Heart right ventricle (tissue), 16 donors: ENCODE measurements at regions of chr5 and their contacts with region 1.

Region 1: GRCh38 chr5:142618130-142618523 is 67.8 kb downstream of the FGF1 start:
- DNase-seq: peak in 1 of 2 donors; percentile 41
- ATAC-seq: peak in 7 of 8 donors; percentile 27 to 71 (median 62)
- H3K4me3 ChIP-seq: no peak overlapping the region
- H3K27ac ChIP-seq: peak overlapping the region in 5 of 10 donors; percentile 6 to 57 (median 40)
- H3K4me1 ChIP-seq: peaks cover 0 to 28% (median 4%) of the 10 kb centered on the region in 9 donors
- H3K27me3 ChIP-seq: no peaks in the 10 kb centered on the region
- CTCF ChIP-seq: no peak

Region 2: GRCh38 chr5:142233083-142234032 is 384.8 kb before region 1 on chr5:
- intact Hi-C with region 1: no loop called
- DNase-seq: no peak
- ATAC-seq: no peak
- H3K4me3 ChIP-seq: no peak overlapping the region
- H3K27ac ChIP-seq: no peak overlapping the region
- H3K4me1 ChIP-seq: peaks cover 0 to 13% (median 3%) of the 10 kb centered on the region in 9 donors
- H3K27me3 ChIP-seq: no peaks in the 10 kb centered on the region
- CTCF ChIP-seq: no peak

Region 3: DNA sequence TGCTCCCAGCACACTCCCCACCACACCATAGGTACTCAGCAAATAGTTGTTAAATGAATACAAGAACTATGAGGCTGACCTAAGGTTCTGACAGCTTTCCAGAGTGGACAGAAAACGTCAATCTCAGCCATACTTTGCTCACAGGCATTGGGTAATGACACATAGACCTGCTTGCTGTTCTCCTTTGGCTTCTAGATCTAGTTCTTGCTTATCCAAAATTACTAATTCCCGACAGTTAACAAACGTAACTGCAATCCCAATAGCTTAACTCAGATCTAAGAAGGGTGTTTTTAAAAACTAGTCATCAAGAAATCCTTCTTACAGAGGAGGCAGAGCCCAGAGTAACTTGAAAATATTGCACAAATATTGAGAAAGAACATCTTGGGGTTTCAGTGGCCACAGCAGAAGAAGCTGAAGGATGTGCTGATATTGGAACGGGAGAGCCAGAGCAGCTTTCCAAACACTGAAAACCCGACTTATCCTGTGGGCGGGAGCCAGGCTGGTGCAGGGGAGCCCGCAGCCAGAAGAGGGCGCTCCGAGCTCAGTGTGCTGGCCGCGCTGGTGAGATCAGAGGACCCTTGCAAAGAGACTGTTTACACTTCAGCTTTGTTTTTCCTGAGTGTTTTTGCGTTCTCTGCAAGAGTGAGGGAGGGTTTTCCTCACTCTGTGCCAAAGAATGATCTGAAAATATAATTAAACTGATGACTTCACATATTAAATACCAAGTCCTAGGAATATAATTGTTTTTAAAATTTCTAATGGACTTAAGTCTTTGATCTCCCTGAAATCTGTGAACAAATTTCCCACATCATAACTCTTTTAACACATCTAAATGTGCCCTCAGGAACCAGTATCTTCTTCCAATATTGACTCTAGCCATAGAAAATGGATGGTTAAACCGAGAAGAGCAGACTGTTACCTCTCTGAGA is 37.5 kb after region 1 on chr5:
- intact Hi-C with region 1: loop called in 4 of 10 experiments (anchors 5 kb)
- DNase-seq: peak; percentile 86 to 89
- ATAC-seq: peak; percentile 85 to 96 (median 92)
- H3K4me3 ChIP-seq: no peak overlapping the region
- H3K27ac ChIP-seq: peak overlapping the region in 9 of 10 donors; percentile 3 to 81 (median 66)
- H3K4me1 ChIP-seq: peaks cover 5 to 53% (median 27%) of the 10 kb centered on the region in 9 donors
- H3K27me3 ChIP-seq: peaks cover 0 to 7% (median 0%) of the 10 kb centered on the region in 7 donors
- CTCF ChIP-seq: peak; percentile 98 to 100 (median 99)